GM10248 (cell line): ENCODE measurements at regions of chr3 and their contacts with region 1.

Region 1: GRCh38 chr3:156151824-156152428 is 31.5 kb downstream of the KCNAB1 start:
- DNase-seq: peak; percentile 43
- CTCF ChIP-seq: peak; percentile 73

Region 2: GRCh38 chr3:155995525-155996351 is 156.2 kb before region 1 on chr3:
- CTCF ChIA-PET with region 1: no interaction called
- POLR2A ChIA-PET with region 1: no interaction called
- DNase-seq: peak; percentile 30
- CTCF ChIP-seq: peak; percentile 27

Region 3: GRCh38 chr3:156126467-156126866 is 25.5 kb before region 1 on chr3:
- CTCF ChIA-PET with region 1: interaction called, 12 read pairs
- POLR2A ChIA-PET with region 1: no interaction called
- DNase-seq: no peak
- CTCF ChIP-seq: no peak

Region 4: DNA sequence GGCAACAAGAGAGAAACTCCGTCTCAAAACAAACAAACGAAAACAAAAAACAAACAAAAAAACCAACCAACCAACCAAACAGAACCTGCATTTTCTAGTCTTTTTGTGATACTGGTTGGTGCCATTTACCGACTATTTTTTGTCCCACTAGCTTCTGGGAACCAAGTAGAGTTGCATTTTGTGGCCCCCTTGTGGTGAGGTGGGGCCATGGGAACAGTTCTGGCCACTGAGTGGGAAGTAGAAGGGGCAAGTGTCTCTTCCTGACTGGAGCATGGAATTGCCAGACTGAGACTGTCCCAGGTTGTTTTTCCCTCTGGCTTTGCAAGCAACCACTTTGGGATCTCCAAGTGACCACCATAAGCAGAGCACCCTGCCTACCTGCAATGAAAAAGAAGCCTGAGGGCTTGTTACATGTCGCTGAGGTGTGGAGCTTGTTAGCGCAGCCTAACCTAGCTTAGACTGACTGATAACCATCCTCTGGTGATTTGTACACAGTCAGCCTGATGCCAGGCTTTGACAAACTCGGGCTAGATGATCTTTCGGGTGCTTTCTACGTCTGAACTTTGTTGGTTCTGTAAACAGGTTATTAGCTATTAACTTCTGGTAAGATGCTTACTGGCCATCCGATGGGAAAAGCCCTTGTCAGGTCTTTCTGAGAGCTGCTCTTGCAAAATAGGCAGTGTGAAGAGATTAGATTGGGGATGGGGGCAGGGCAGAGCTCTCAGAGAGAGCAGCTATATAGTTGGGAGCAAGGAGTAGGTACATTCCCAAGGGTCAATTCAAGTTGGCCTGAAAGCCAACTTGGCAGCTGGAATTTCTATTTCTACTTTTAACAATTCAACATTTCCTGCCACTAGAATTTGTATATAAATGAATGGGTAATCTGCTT is 230.8 kb after region 1 on chr3:
- CTCF ChIA-PET with region 1: interaction called, 134 read pairs
- POLR2A ChIA-PET with region 1: no interaction called
- DNase-seq: peak; percentile 45
- CTCF ChIP-seq: peak; percentile 50

Region 5: DNA sequence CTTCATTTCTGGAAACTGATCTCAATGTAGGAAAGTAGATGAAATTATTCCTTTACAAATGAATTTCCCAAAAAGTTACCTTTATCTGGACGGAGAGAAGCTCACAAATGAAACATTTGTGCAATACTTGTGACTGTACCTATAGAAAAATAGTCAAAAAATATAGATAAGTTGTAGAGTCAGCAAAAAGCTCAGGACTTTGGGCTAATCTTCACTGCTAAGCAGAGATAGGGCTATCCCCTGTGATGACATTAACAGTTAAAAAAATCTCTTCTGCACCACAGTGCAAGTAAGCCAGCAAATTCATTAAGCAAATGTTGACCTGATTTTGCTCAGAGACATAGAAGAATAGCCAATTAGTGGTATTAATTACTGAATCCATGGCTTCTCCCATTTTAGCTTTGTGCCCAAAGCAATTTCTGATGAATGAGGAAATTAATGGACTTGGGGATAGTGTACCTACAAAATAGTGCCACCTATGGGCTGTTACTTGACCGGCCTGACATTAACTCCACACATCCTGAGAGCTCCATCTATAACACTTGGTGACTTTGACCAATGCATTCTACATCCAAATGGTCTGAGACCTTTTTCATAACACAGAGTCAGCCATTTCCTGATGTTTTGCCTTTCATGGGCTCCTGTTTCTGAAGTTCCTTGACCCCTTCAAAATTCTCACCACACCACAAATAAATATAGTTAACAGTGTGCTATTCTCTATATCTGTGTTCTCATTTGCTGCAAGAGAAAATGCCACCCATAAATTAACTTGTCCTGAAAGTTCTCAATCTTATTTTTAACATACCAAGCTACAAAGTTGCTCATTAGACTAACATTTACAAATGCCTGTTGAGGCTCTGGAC is 298.0 kb after region 1 on chr3:
- CTCF ChIA-PET with region 1: interaction called, 31 read pairs
- POLR2A ChIA-PET with region 1: no interaction called
- DNase-seq: peak; percentile 40
- CTCF ChIP-seq: peak; percentile 56

Region 6: DNA sequence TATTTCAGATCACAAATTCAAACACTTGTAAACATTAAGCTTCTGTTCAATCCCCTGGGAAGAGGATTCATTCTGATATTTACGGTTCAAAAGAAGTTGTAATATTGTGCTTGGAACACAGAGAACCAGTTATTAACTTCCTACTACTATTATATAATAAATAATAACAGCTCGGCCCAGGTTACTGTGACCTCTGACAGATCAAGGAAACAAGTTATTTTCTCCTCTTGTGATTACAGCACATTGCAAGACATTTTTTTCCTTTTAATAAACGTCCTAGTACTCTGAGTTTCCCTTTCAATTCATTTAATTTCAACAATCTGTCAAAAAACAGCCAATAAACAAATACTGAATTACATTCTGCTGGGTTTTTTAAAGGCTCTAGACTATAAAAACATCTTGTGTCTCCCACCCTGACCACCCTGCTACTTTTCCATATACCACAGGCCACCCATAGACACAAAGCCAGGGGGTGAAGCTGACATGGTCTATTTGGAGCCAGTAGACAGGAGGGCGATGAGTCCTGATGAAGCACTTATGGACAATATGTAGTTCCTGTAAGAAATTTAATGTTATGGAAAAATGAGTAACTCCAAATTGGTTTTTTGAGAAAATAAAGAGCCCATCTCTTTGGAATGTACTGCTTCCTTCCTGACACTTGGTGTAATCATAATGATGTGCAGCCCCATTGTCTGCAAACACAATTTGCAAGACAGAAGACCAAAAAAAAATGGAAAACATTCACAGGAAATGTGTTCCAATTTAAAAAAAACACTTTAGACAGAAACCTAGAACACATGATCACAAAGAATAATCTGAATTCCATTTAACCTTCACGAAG is 391.0 kb after region 1 on chr3:
- CTCF ChIA-PET with region 1: interaction called, 10 read pairs
- POLR2A ChIA-PET with region 1: no interaction called
- DNase-seq: no peak
- CTCF ChIP-seq: no peak

Region 7: GRCh38 chr3:157232146-157232545 is 1080.2 kb after region 1 on chr3:
- CTCF ChIA-PET with region 1: interaction called, 11 read pairs
- POLR2A ChIA-PET with region 1: no interaction called
- DNase-seq: no peak
- CTCF ChIP-seq: no peak